Right ventricle myocardium inferior (tissue), 1 donor: ENCODE measurements at regions of chr4 and their contacts with region 1.

Region 1: GRCh38 chr4:71259911-71260331 is 78.9 kb upstream of the SLC4A4 start:
- DNase-seq: no peak
- ATAC-seq: peak; percentile 67

Region 2: DNA sequence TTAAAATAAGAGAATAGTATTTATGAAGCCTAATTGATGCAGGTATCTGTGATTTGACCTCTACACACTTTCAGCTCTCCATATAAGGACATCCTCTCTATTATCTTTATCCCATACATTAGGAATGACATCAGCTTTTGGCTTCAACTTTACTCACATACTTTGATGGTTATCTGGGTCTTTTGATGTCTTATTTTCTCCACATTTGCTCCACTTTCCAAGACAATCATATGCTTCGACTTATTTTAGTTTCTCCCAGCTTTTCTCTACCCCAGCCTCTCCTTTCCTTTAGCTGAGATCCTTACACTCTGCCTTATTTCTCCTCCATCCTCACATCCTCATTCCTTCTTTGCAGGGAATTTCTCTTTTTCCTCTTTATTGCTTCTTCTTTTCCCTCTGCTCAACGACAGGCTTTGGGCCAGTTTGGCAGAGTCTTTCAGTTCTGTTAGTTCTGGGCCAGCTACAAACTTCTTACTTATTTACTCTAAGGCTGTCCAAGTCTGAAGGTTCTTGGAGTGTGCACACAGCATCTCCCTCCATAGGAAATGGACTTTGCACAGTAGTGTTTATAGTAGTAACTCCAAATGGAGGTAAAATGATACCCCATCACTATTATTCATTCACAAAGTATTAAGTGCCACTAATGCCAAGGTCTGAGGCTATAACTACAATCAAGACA is 129.4 kb after region 1 on chr4:
- intact Hi-C with region 1: no loop called
- DNase-seq: no peak
- ATAC-seq: peak; percentile 57

Region 3: GRCh38 chr4:71445811-71446210 is 185.9 kb after region 1 on chr4:
- intact Hi-C with region 1: loop called (anchors 5 kb)
- DNase-seq: no peak
- ATAC-seq: no peak

Region 4: GRCh38 chr4:71487344-71487920 is 227.5 kb after region 1 on chr4:
- intact Hi-C with region 1: no loop called
- DNase-seq: no peak
- ATAC-seq: peak; percentile 75